CD4-positive, alpha-beta memory T cell (primary cell): ENCODE measurements at regions of chr1 and their contacts with region 1.

Region 1: DNA sequence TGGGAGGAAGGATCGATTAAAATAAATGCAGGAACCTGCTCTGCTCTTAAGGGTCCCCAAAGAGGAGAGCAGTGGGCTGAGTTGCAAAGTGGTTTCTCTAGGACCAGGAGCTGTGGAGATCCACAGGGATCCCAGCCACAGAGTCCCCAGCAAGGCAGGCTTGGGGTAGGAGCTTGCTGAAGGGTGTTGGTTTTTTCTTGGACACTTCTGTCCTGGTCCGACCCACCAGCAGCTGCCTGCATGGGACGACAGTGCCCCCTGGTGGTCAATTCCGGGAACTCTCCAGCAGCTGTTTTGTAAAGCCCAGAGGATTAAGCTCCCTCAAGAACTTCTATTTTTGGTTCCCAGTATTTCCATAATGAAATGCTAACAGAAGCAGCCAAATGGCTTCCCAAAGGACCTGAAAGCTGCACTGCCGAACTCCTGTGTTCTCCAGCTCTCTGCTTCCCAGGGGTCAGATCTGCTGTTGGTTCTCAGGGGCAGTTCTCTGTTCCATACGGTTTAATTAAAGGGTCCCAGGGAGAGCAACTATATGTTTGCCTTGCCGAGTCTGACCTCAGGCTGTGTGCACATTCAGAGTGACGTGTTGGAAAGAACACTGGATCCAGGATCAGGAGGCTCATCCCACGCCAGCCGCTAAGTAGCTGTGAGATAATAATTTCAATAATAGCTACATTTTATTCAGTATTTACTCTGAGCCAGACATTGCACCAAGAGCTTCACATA is 23.2 kb downstream of the NENF start:
- DNase-seq: peak; percentile 65 to 73 (median 69)
- H3K4me3 ChIP-seq: no peak overlapping the region
- H3K4me3 Mint-ChIP-seq: no peak overlapping the region
- H3K27ac ChIP-seq: no peak overlapping the region
- H3K27ac Mint-ChIP-seq: no peak overlapping the region
- H3K4me1 ChIP-seq: peaks cover 3% of the 10 kb centered on the region
- H3K4me1 Mint-ChIP-seq: peaks cover 0 to 10% (median under 1%) of the 10 kb centered on the region in 4 donors
- H3K27me3 ChIP-seq: no peaks in the 10 kb centered on the region
- H3K27me3 Mint-ChIP-seq: no peaks in the 10 kb centered on the region

Region 2: DNA sequence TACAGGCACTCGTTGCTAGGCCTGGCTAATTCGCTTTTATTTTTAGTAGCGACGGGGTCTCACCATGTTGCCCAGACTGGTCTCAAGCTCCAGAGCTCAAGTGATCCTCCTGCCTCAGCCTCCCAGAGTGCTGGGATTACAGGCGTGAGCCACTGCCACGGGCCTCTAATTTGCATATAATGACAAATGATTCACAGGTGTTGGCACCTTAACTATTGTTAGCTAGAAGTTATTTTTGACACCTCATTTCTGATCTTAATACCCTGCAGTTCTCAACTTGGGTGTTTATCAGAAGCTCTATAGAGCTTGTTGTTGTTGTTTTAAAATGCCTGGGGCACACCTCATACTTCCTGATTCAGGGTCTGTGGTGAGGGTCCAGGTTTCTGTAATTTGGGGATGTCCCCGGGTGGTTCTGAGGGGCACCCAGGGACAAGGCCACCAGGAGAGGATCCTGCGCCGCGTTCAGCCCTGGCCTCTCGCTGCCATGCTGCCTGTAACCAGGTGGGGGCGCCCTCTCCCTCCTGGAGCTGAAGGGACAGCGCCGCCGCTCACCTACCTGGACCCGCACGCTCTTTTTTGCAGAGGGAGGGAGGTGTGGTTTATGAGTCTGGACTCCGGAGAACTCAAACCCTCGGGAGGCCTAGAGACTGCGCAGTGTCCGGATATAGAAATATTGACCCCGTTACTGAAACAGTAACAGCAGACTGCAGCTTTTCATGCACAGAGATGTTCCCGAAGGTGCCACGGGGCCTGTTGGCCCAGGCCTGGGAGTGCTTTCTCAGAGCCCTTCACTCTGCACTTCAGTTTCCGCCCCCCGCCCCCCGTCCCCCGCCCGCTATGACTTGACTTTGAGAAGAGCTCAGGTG is 757.6 kb before region 1 on chr1:
- CTCF ChIA-PET with region 1: interaction called, 36 read pairs
- POLR2A ChIA-PET with region 1: no interaction called
- intact Hi-C with region 1: loop called (anchors 5 kb)
- DNase-seq: peak; percentile 72 to 81 (median 73)
- H3K4me3 ChIP-seq: peak overlapping the region in 1 of 2 donors; percentile 30
- H3K4me3 Mint-ChIP-seq: peak overlapping the region; percentile 66 to 82 (median 78)
- H3K27ac ChIP-seq: no peak overlapping the region
- H3K27ac Mint-ChIP-seq: no peak overlapping the region
- H3K4me1 ChIP-seq: peaks cover 21% of the 10 kb centered on the region
- H3K4me1 Mint-ChIP-seq: peaks cover 8 to 26% (median 19%) of the 10 kb centered on the region in 4 donors
- H3K27me3 ChIP-seq: no peaks in the 10 kb centered on the region
- H3K27me3 Mint-ChIP-seq: peaks cover 0 to 3% of the 10 kb centered on the region in 2 donors

Region 3: DNA sequence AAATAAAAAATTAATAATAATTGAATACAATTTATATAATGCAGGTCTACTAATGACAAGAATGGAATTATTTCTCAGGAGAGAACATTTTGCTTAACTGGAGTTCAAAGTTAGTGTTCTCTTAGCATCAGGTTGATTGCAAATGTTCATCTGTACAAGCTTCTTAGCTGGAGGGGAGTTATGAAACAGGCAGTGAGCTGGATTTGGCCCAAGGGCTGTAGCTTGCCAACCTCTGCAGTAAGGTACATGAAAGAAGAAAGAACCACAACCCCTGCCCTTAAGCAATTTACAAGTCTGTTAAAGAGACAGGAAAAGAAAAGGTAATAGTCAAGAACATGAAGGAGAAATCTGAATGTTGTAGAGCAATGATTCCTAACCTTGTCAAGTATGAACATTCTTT is 642.4 kb before region 1 on chr1:
- CTCF ChIA-PET with region 1: no interaction called
- POLR2A ChIA-PET with region 1: no interaction called
- intact Hi-C with region 1: no loop called
- DNase-seq: no peak
- H3K4me3 ChIP-seq: no peak overlapping the region
- H3K4me3 Mint-ChIP-seq: no peak overlapping the region
- H3K27ac ChIP-seq: no peak overlapping the region
- H3K27ac Mint-ChIP-seq: peak overlapping the region in 2 of 7 donors; percentile 17 to 82
- H3K4me1 ChIP-seq: no peaks in the 10 kb centered on the region
- H3K4me1 Mint-ChIP-seq: peaks cover 3 to 14% (median 14%) of the 10 kb centered on the region in 4 donors
- H3K27me3 ChIP-seq: no peaks in the 10 kb centered on the region
- H3K27me3 Mint-ChIP-seq: no peaks in the 10 kb centered on the region

Region 4: DNA sequence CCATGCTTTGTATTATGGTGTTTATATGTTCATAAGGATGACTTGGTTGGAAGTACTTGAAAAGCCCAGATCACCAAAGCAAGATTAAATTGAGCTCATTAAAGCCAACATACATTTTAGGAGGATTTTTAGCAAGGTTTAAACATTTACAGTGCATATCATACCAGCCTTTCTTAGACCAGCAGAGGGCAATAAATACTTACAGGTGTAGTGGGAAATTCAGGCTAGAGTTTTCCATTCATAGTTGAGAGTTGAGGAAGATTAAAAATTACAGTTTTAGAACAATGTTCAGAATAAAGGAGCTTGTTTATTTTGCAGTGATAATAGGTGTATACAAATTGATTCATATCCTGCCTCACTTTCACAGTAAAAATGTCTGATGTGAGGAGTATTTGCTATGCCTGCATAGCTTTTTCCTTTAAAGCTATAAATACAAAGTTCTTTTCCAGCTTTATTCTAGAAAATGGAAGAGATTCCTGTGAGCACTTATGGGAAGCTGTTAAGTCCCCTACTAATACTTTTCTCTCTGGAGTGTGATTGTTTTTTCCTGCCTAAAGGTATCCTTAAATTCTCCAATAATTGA is 385.2 kb before region 1 on chr1:
- CTCF ChIA-PET with region 1: interaction called, 404 read pairs
- POLR2A ChIA-PET with region 1: interaction called, 10 read pairs
- intact Hi-C with region 1: loop called (anchors 1 kb)
- DNase-seq: peak in 4 of 5 donors; percentile 49 to 55 (median 52)
- H3K4me3 ChIP-seq: no peak overlapping the region
- H3K4me3 Mint-ChIP-seq: no peak overlapping the region
- H3K27ac ChIP-seq: no peak overlapping the region
- H3K27ac Mint-ChIP-seq: no peak overlapping the region
- H3K4me1 ChIP-seq: no peaks in the 10 kb centered on the region
- H3K4me1 Mint-ChIP-seq: peaks cover 0 to 3% (median 1%) of the 10 kb centered on the region in 4 donors
- H3K27me3 ChIP-seq: no peaks in the 10 kb centered on the region
- H3K27me3 Mint-ChIP-seq: no peaks in the 10 kb centered on the region

Region 5: GRCh38 chr1:212341090-212341489 is 114.9 kb before region 1 on chr1:
- CTCF ChIA-PET with region 1: interaction called, 10 read pairs
- POLR2A ChIA-PET with region 1: no interaction called
- intact Hi-C with region 1: no loop called
- DNase-seq: no peak
- H3K4me3 ChIP-seq: no peak overlapping the region
- H3K4me3 Mint-ChIP-seq: no peak overlapping the region
- H3K27ac ChIP-seq: no peak overlapping the region
- H3K27ac Mint-ChIP-seq: peak overlapping the region in 5 of 7 donors; percentile 1 to 47 (median 42)
- H3K4me1 ChIP-seq: no peaks in the 10 kb centered on the region
- H3K4me1 Mint-ChIP-seq: peaks cover 15 to 28% (median 17%) of the 10 kb centered on the region in 4 donors
- H3K27me3 ChIP-seq: no peaks in the 10 kb centered on the region
- H3K27me3 Mint-ChIP-seq: no peaks in the 10 kb centered on the region

Region 6: GRCh38 chr1:212432706-212433576 is 23.0 kb before region 1 on chr1 and contains the start of gene NENF:
- CTCF ChIA-PET with region 1: interaction called, 20 read pairs
- POLR2A ChIA-PET with region 1: interaction called, 5 read pairs
- intact Hi-C with region 1: no loop called
- DNase-seq: peak; percentile 68 to 79 (median 72)
- H3K4me3 ChIP-seq: peak within 1 kb of the TSS; percentile 56 to 63
- H3K4me3 Mint-ChIP-seq: peak within 1 kb of the TSS; percentile 77 to 86 (median 83)
- H3K27ac ChIP-seq: peak within 1 kb of the TSS; percentile 29
- H3K27ac Mint-ChIP-seq: peak within 1 kb of the TSS in 6 of 7 donors; percentile 31 to 86 (median 74)
- H3K4me1 ChIP-seq: peaks cover 20% of the 10 kb centered on the region
- H3K4me1 Mint-ChIP-seq: peaks cover 10 to 35% (median 18%) of the 10 kb centered on the region in 4 donors
- H3K27me3 ChIP-seq: no peaks in the 10 kb centered on the region
- H3K27me3 Mint-ChIP-seq: peaks cover 1 to 3% of the 10 kb centered on the region in 2 donors
- total RNA-seq, gene NENF: 18.7 to 21.0 TPM

Region 7: DNA sequence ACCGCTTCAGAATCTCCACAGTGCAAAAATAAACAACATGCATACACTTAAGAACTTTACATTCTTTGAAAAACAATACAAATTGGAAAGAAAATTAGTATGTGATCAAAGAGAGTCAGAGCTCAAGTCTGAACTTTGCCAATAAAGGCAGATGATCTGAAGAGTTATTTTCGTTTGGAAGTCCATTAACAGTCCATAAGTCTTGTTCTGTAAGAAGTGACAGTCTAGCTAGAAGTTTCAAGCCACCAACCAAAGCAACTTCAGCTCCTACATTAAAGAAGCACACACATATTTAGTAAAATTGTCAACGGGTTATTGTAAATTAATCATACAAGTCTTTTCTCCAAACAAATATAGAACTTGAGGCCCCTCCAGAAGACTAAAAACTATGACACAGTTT is 539.0 kb after region 1 on chr1:
- CTCF ChIA-PET with region 1: interaction called, 9 read pairs
- POLR2A ChIA-PET with region 1: no interaction called
- intact Hi-C with region 1: loop called (anchors 5 kb)
- DNase-seq: no peak
- H3K4me3 ChIP-seq: no peak overlapping the region
- H3K4me3 Mint-ChIP-seq: no peak overlapping the region
- H3K27ac ChIP-seq: no peak overlapping the region
- H3K27ac Mint-ChIP-seq: no peak overlapping the region
- H3K4me1 ChIP-seq: no peaks in the 10 kb centered on the region
- H3K4me1 Mint-ChIP-seq: peaks cover 3 to 6% (median 5%) of the 10 kb centered on the region in 4 donors
- H3K27me3 ChIP-seq: no peaks in the 10 kb centered on the region
- H3K27me3 Mint-ChIP-seq: no peaks in the 10 kb centered on the region